Calu3 (cell line): ENCODE measurements at regions of chr22 and their contacts with region 1.

Region 1: GRCh38 chr22:22060200-22061084 is 77.9 kb upstream of the TOP3B start:
- DNase-seq: peak; percentile 85
- H3K4me3 Mint-ChIP-seq: no peak overlapping the region
- H3K27ac Mint-ChIP-seq: no peak overlapping the region
- H3K4me1 Mint-ChIP-seq: no peaks in the 10 kb centered on the region
- H3K27me3 Mint-ChIP-seq: peaks cover 57% of the 10 kb centered on the region
- CTCF ChIP-seq: peak; percentile 87

Region 2: GRCh38 chr22:22130953-22131608 is 70.6 kb after region 1 on chr22:
- CTCF ChIA-PET with region 1: interaction called, 3 read pairs
- intact Hi-C with region 1: loop called (anchors 10 kb)
- DNase-seq: no peak
- H3K4me3 Mint-ChIP-seq: no peak overlapping the region
- H3K27ac Mint-ChIP-seq: no peak overlapping the region
- H3K4me1 Mint-ChIP-seq: no peaks in the 10 kb centered on the region
- H3K27me3 Mint-ChIP-seq: peaks cover 63% of the 10 kb centered on the region
- CTCF ChIP-seq: no peak

Region 3: GRCh38 chr22:22235558-22235957 is 175.1 kb after region 1 on chr22:
- CTCF ChIA-PET with region 1: no interaction called
- intact Hi-C with region 1: no loop called
- DNase-seq: peak; percentile 42
- H3K4me3 Mint-ChIP-seq: no peak overlapping the region
- H3K27ac Mint-ChIP-seq: no peak overlapping the region
- H3K4me1 Mint-ChIP-seq: no peaks in the 10 kb centered on the region
- H3K27me3 Mint-ChIP-seq: peaks cover 24% of the 10 kb centered on the region
- CTCF ChIP-seq: peak; percentile 45